ENCODE measurements at regions of chr13 and their contacts with region 1.

Region 1: GRCh38 chr13:110138010-110138699 is 168.8 kb downstream of the COL4A1 start:
- DNase-seq: peak; percentile 93
- ATAC-seq: peak; percentile 52

Region 2: DNA sequence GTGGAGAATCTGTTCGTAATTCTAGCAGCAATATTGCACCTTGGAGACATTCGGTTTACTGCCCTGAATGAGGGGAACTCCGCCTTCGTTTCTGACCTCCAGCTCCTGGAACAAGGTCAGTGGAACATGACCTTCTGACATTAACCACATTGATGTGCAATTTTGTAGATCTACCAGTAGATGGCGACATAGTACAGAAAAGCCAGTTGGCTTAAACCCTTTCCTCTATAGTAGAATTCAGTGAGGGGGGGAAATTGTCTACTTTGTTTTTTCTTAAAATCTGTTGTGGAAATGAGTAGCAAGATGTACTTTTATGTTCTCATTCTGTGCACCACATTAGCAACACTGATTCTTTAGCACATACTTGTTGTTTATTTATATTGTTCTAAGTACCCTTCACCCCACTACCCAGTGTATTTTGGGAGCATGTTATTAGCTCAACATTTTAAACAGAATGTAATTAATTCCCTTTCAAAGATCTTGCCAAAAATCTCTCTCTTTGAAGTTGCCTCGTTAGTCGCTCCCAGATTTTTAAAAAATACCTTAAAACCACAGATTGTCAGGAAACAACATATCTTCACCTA is 1176.5 kb before region 1 on chr13:
- intact Hi-C with region 1: loop called (anchors 5 kb)
- DNase-seq: no peak
- ATAC-seq: peak; percentile 73

Region 3: DNA sequence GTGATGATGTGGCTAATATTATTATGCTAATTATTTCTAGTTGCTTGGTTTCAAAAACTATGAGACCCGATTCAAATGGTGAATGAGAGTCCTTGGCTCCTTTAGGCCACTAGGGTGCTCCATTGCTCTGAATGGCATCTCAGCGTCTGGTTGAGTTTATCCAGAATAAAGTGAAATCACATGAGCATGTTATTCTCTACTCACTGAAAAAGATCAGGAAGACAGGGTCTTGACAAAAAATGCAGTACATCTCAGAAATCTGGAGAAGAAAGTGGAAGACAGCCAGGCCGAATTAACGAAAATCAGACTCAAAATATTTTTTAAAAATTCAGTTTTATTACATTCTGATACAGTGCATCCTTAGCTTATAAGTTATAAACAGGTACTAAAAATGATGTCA is 992.5 kb before region 1 on chr13:
- intact Hi-C with region 1: loop called (anchors 10 kb)
- DNase-seq: no peak
- ATAC-seq: peak; percentile 76

Region 4: GRCh38 chr13:109809216-109809932 is 328.8 kb before region 1 on chr13:
- intact Hi-C with region 1: no loop called
- DNase-seq: no peak
- ATAC-seq: no peak

Measured in Right ventricle myocardium inferior (tissue), 1 donor.